ENCODE measurements at regions of chr15 and their contacts with region 1.

Region 1: GRCh38 chr15:41774062-41774881 is at the start of gene MAPKBP1:
- DNase-seq: peak; percentile 97
- CTCF ChIP-seq: peak; percentile 88

Region 2: DNA sequence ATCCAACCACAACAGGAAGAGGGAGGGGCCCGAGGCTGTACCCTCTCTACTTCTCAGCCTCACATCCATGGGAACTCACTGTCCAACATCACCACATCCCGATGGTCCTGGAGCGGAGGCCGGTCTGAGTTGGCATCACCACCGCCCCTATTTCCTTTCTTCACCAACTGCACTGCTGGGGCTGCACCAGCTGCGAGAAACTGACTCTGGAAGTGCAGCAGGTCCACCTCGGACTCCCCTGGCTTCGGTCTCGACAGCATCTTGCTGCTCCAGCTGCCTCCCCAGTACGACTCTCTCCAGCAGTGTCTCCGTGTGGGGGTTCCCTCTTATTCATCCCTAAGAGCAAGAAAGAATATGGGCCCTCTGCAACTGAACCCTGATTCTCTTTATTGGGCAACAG is 237.4 kb before region 1 on chr15:
- CTCF ChIA-PET with region 1: no interaction called
- POLR2A ChIA-PET with region 1: no interaction called
- DNase-seq: no peak
- CTCF ChIP-seq: no peak

Region 3: DNA sequence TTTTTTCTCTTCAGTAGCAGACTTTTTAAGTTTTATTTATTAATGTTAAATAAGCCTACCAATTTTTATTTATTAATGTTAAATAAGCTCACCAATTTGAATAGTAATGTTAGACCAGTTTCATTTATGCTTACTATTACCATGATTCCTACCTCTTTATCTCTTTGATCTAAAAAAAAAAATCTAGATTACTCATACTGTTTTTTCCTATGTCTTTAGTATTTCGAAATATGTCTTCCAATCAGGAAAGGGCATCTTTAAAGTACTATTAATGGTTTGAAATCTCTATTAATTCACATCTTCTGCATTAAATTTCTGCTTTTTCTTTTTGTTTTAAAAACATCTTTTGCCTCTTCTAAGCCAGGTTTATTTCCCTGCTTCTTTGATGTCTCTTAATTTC is 27.5 kb before region 1 on chr15:
- CTCF ChIA-PET with region 1: interaction called, 14 read pairs
- POLR2A ChIA-PET with region 1: no interaction called
- DNase-seq: no peak
- CTCF ChIP-seq: no peak

Region 4: GRCh38 chr15:41790756-41791546 is 16.7 kb after region 1 on chr15:
- CTCF ChIA-PET with region 1: interaction called, 56 read pairs
- POLR2A ChIA-PET with region 1: interaction called, 3 read pairs
- DNase-seq: no peak
- CTCF ChIP-seq: no peak

Region 5: GRCh38 chr15:41806291-41807181 is 32.3 kb after region 1 on chr15:
- CTCF ChIA-PET with region 1: interaction called, 316 read pairs
- POLR2A ChIA-PET with region 1: no interaction called
- DNase-seq: no peak
- CTCF ChIP-seq: no peak

Region 6: GRCh38 chr15:41820791-41821423 is 46.6 kb after region 1 on chr15:
- CTCF ChIA-PET with region 1: interaction called, 25 read pairs
- POLR2A ChIA-PET with region 1: no interaction called
- DNase-seq: no peak
- CTCF ChIP-seq: no peak

Region 7: GRCh38 chr15:41904541-41905005 is 130.3 kb after region 1 on chr15:
- CTCF ChIA-PET with region 1: interaction called, 49 read pairs
- POLR2A ChIA-PET with region 1: no interaction called
- DNase-seq: peak; percentile 84
- CTCF ChIP-seq: peak; percentile 87

Region 8: DNA sequence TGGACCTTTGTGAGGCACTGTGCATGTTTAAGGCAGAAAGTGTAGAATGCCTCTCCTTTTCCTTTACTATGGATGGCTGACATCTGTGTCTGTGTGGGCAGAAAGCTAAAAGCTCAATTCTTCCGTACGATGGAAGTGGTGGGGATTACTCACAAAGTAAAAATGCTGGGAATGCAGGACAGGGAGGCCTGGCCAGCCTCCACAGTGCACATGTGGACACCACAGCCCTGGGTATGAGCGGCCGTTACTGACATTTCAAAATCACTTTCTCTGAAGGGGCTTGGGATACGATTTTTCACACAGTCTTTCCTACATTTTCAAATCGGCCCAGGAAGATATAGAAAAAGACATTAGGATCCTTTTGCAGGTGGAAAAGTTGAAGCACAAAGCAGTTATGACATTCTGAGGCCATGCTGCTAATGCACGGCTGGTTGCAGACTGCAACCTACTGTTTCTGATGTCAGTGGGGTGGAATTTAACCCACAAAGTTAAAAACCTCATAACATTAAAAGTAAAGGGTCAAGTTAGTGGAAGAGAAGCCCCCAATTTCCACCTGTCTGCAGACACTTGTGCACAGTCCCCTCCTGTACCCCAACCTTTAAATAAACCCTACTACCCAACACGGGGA is 170.2 kb after region 1 on chr15:
- CTCF ChIA-PET with region 1: no interaction called
- POLR2A ChIA-PET with region 1: no interaction called
- DNase-seq: no peak
- CTCF ChIP-seq: no peak

Region 9: DNA sequence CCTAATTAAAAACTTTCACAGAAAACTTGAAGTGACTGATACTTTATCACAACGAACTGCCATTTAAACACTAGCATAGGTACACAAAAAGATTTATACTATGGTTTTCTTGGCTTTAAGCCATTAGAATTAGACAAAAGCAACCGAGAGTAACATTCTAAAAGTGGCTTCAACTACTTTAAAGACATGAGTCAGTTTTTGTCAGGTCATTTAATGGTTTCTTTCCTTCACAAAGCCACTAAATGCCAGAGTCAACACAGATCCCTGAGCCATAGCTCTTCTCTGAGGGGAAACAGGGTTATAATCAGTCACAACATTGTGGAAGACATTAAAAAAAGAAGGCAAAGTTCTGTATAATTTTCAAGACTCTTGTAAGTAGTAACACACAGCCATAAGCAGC is 639.6 kb after region 1 on chr15:
- CTCF ChIA-PET with region 1: no interaction called
- POLR2A ChIA-PET with region 1: no interaction called
- DNase-seq: no peak
- CTCF ChIP-seq: no peak